Activated CD4-positive, alpha-beta T cell treated with anti-CD3 and anti-CD28 coated beads for 36 hours (primary cell): ENCODE measurements at regions of chr1 and their contacts with region 1.

Region 1: GRCh38 chr1:160777486-160778089 is 18.4 kb upstream of the LY9 start:
- DNase-seq: peak; percentile 64
- ATAC-seq: peak; percentile 38
- H3K4me3 Mint-ChIP-seq: no peak overlapping the region
- H3K27ac Mint-ChIP-seq: peak overlapping the region; percentile 5
- H3K4me1 Mint-ChIP-seq: peaks cover 50% of the 10 kb centered on the region
- H3K27me3 Mint-ChIP-seq: no peaks in the 10 kb centered on the region

Region 2: GRCh38 chr1:160630523-160631451 is 146.8 kb before region 1 on chr1:
- CTCF ChIA-PET with region 1: no interaction called
- POLR2A ChIA-PET with region 1: no interaction called
- intact Hi-C with region 1: no loop called
- DNase-seq: no peak
- ATAC-seq: no peak
- H3K4me3 Mint-ChIP-seq: peak overlapping the region; percentile 65
- H3K27ac Mint-ChIP-seq: peak overlapping the region; percentile 99
- H3K4me1 Mint-ChIP-seq: peaks cover 94% of the 10 kb centered on the region
- H3K27me3 Mint-ChIP-seq: no peaks in the 10 kb centered on the region

Region 3: GRCh38 chr1:160681067-160681890 is 96.3 kb before region 1 on chr1:
- CTCF ChIA-PET with region 1: interaction called, 49 read pairs
- POLR2A ChIA-PET with region 1: no interaction called
- intact Hi-C with region 1: no loop called
- DNase-seq: peak; percentile 96
- ATAC-seq: peak; percentile 76
- H3K4me3 Mint-ChIP-seq: no peak overlapping the region
- H3K27ac Mint-ChIP-seq: peak overlapping the region; percentile 94
- H3K4me1 Mint-ChIP-seq: peaks cover 78% of the 10 kb centered on the region
- H3K27me3 Mint-ChIP-seq: no peaks in the 10 kb centered on the region

Region 4: DNA sequence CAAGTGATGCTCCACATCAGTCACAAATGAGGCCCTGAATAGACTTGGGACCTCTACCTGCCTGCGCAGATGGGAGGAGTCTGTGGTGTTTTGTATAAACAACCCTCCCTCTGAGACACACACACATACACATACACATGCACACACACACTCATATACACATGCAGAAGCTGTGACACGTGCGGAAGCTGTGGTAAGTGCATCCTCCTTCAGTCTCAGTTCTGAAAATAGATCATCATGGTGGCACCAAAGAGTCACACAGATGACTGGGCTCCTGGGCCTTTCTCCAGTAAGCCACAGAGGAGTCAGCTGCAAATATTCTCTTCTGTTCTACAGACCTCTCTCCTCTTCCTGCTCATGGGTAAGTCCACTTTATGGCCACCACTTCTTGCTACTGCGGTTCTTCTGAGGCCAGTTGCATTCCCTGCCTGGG is 18.4 kb after region 1 on chr1 and contains the start of gene LY9:
- CTCF ChIA-PET with region 1: interaction called, 62 read pairs
- POLR2A ChIA-PET with region 1: no interaction called
- intact Hi-C with region 1: loop called in 1 of 2 experiments (anchors 2 kb)
- DNase-seq: peak; percentile 89
- ATAC-seq: peak; percentile 79
- H3K4me3 Mint-ChIP-seq: peak within 1 kb of the TSS; percentile 78
- H3K27ac Mint-ChIP-seq: peak within 1 kb of the TSS; percentile 95
- H3K4me1 Mint-ChIP-seq: peaks cover 61% of the 10 kb centered on the region
- H3K27me3 Mint-ChIP-seq: no peaks in the 10 kb centered on the region
- total RNA-seq, gene LY9: 10.0 to 11.0 TPM

Region 5: GRCh38 chr1:160813215-160813614 is 35.6 kb after region 1 on chr1:
- CTCF ChIA-PET with region 1: interaction called, 37 read pairs
- POLR2A ChIA-PET with region 1: no interaction called
- intact Hi-C with region 1: no loop called
- DNase-seq: peak; percentile 32
- ATAC-seq: peak; percentile 98
- H3K4me3 Mint-ChIP-seq: no peak overlapping the region
- H3K27ac Mint-ChIP-seq: no peak overlapping the region
- H3K4me1 Mint-ChIP-seq: peaks cover 42% of the 10 kb centered on the region
- H3K27me3 Mint-ChIP-seq: no peaks in the 10 kb centered on the region

Region 6: DNA sequence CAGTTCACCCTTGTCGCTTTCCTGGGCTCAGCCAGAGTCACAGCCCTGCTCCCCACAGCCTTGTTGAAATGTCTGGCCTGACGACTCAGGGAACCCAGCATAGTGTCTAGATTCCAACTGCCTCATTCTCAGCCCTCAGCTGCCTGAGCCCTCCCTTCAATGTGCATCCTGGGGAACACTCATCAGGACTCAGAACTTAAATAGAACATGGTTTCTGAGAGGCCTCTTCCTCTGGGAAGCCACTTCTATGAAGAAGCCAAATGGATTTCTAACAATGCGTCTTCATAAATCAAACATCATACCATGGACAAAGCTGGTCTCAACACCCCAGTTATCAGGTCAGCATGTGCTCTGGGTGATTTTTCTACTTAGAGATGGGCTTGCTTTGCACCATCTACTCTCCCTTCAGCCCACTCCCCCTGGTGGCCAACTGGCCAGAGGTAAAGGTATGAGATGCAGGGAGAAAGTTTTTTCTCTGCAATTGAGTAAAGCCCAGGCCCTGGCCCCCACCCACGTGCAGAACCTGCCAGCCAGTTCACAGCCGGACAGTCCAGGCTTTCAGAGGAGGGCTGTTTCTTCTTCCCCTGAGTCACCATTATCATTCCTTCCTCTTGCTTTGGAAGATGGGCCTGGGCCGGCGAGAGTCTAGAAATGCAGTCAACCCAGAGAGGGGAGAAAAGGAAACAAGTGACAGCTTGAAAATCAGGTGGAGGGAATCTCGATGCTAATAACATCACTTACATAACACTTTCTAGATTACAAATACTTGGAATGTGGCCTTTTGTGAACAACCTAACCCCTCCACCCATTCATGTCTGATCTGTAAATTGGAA is 52.9 kb after region 1 on chr1:
- CTCF ChIA-PET with region 1: interaction called, 130 read pairs
- POLR2A ChIA-PET with region 1: no interaction called
- intact Hi-C with region 1: loop called (anchors 1 kb)
- DNase-seq: peak; percentile 92
- ATAC-seq: peak; percentile 83
- H3K4me3 Mint-ChIP-seq: no peak overlapping the region
- H3K27ac Mint-ChIP-seq: peak overlapping the region; percentile 44
- H3K4me1 Mint-ChIP-seq: peaks cover 18% of the 10 kb centered on the region
- H3K27me3 Mint-ChIP-seq: no peaks in the 10 kb centered on the region

Region 7: GRCh38 chr1:160951443-160952128 is 174.0 kb after region 1 on chr1:
- CTCF ChIA-PET with region 1: interaction called, 34 read pairs
- POLR2A ChIA-PET with region 1: no interaction called
- intact Hi-C with region 1: loop called (anchors 1 to 5 kb)
- DNase-seq: peak; percentile 85
- ATAC-seq: peak; percentile 89
- H3K4me3 Mint-ChIP-seq: no peak overlapping the region
- H3K27ac Mint-ChIP-seq: no peak overlapping the region
- H3K4me1 Mint-ChIP-seq: peaks cover 3% of the 10 kb centered on the region
- H3K27me3 Mint-ChIP-seq: no peaks in the 10 kb centered on the region